ENCODE measurements at regions of chr6 and their contacts with region 1.

Region 1: GRCh38 chr6:150865406-150866146 is at the start of gene MTHFD1L:
- DNase-seq: peak; percentile 89
- CTCF ChIP-seq: peak; percentile 81

Region 2: GRCh38 chr6:150848400-150848799 is 17.2 kb before region 1 on chr6:
- CTCF ChIA-PET with region 1: interaction called, 10 read pairs
- POLR2A ChIA-PET with region 1: interaction called, 3 read pairs
- DNase-seq: no peak
- CTCF ChIP-seq: no peak

Region 3: DNA sequence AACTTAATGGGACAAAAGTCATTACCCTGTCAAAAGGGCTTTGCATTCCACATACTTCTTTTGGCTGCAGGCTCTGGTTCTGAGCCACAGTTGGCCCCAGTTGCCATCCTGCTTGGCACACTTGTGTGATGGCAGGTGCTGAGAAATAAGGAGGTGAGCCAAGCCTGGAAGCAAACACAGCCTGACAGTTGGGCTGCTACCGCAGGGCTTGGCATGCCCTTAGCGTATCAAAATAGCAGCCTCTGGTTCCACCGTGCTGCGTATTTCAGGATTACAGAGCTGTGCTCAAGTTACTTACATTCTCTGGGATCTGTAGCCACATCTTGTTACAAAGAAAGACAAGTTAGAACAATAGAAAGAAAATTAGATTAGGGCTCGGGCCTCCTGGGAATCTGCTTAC is 11.0 kb after region 1 on chr6:
- CTCF ChIA-PET with region 1: interaction called, 21 read pairs
- POLR2A ChIA-PET with region 1: no interaction called
- DNase-seq: no peak
- CTCF ChIP-seq: no peak

Region 4: DNA sequence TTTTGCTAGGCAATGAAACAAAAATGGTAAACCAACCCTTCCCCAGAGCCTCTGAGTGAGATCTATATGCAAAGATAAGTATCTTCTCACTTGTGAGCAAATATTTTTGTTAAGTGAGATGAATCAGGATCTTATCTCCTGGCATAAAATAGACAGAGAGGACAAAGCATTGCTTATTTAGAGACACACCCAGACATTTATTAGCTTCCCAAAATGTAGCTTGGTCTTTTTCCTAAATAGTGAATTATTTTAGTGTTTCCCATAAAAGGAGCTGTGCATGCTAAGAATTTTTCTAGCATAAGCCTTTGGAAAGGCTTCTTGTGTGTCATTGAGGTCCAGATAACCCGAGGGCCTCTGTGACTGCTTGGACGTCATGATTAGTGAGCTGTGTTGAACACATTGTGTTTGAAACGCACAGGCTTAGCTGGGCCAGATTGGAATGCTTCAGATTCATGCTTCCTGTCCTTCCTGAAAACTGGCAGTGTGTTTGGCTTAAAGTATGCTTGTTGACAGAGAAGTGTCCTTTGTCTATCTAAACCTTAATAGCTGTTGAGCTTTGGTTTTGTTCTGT is 16.4 kb after region 1 on chr6:
- CTCF ChIA-PET with region 1: interaction called, 66 read pairs
- POLR2A ChIA-PET with region 1: interaction called, 9 read pairs
- DNase-seq: no peak
- CTCF ChIP-seq: no peak